CD4-positive, alpha-beta memory T cell (primary cell): ENCODE measurements at regions of chr11 and their contacts with region 1.

Region 1: DNA sequence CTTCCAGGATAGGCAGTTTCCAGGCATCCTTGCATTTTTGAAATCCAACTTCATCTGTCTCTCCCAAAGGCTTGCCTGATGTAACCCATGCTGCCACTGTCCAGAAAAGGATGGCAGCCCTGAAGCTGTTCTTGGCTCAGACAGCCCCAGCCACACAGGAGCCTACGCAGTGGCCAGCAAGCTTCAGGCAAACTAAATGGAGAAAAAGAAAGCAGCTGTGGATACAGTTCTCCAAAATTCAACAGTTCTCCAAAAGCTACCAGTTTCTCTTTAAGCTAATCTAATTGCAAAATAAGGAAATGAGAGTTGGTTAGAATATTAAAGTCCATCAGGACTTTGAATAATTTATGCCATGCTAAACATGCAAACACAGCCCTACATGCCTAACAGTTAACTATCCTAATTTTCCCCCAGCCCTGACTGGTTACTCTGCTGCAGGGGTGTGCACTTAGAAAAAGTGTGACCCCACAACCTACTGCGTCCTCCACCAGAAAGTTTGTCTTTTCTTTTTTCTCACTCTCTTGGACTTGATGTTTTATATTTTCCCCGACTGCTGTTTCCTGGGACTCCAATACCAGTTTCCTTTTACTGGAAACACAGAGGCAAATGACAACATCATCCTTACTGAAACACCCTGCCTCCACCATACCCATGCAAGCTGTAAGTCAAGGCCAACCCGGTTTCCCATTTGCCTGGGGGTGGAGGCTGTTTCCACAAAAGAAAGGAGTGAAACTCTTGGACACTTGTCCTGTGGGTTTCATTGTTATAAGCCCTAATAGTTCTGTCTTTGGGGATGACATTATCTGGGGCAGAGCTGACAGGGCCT is 69.1 kb upstream of the OR5AN1 start:
- DNase-seq: no peak
- H3K4me3 ChIP-seq: no peak overlapping the region
- H3K4me3 Mint-ChIP-seq: no peak overlapping the region
- H3K27ac ChIP-seq: no peak overlapping the region
- H3K27ac Mint-ChIP-seq: no peak overlapping the region
- H3K4me1 ChIP-seq: no peaks in the 10 kb centered on the region
- H3K4me1 Mint-ChIP-seq: peaks cover 2 to 3% (median 3%) of the 10 kb centered on the region in 4 donors
- H3K27me3 ChIP-seq: no peaks in the 10 kb centered on the region
- H3K27me3 Mint-ChIP-seq: peaks cover 4 to 5% of the 10 kb centered on the region in 2 donors

Region 2: DNA sequence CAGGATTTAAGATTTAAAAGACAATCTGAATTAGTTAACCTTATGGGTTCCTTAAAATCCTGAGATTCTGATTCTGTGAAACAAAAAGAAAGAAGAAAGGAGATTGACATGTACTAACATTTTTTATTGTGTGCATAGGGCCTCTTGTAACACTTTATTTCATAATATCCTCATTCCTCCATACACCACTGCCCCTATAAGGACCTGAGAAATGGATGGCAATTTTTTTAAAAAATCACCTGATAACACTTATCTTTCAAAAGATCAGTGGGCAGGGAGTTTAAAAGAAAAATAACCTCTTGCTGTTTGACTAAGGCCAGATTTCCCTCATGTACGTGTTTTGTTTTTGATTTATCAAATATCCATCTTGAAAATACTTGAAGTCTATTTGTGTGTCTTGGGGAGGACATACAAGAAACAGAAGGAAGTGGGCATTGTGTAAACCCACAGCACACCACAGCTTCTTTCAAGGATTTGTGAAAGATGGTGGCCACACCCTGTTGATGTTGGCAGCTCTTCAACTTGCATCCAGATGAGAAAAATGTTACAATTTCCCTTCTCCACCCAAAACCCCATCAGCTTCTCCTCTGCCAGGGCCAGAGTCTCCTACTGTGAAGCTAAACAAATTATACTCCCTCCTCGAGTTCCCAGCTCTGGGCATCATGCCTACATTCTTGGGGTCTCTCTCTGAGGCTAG is 41.9 kb before region 1 on chr11:
- CTCF ChIA-PET with region 1: no interaction called
- POLR2A ChIA-PET with region 1: no interaction called
- intact Hi-C with region 1: no loop called
- DNase-seq: peak in 4 of 5 donors; percentile 45 to 68 (median 60)
- H3K4me3 ChIP-seq: no peak overlapping the region
- H3K4me3 Mint-ChIP-seq: peak overlapping the region in 7 of 8 donors; percentile 1 to 69 (median 60)
- H3K27ac ChIP-seq: no peak overlapping the region
- H3K27ac Mint-ChIP-seq: peak overlapping the region; percentile 18 to 89 (median 57)
- H3K4me1 ChIP-seq: peaks cover 26% of the 10 kb centered on the region
- H3K4me1 Mint-ChIP-seq: peaks cover 21 to 54% (median 35%) of the 10 kb centered on the region in 4 donors
- H3K27me3 ChIP-seq: no peaks in the 10 kb centered on the region
- H3K27me3 Mint-ChIP-seq: peaks cover 0 to 3% of the 10 kb centered on the region in 2 donors

Region 3: GRCh38 chr11:59417023-59417422 is 127.5 kb after region 1 on chr11:
- CTCF ChIA-PET with region 1: no interaction called
- POLR2A ChIA-PET with region 1: no interaction called
- intact Hi-C with region 1: loop called (anchors 5 kb)
- DNase-seq: no peak
- H3K4me3 ChIP-seq: no peak overlapping the region
- H3K4me3 Mint-ChIP-seq: no peak overlapping the region
- H3K27ac ChIP-seq: no peak overlapping the region
- H3K27ac Mint-ChIP-seq: peak overlapping the region in 1 of 7 donors; percentile 12
- H3K4me1 ChIP-seq: no peaks in the 10 kb centered on the region
- H3K4me1 Mint-ChIP-seq: peaks cover 0 to 4% (median 0%) of the 10 kb centered on the region in 4 donors
- H3K27me3 ChIP-seq: no peaks in the 10 kb centered on the region
- H3K27me3 Mint-ChIP-seq: peaks cover 17 to 32% of the 10 kb centered on the region in 2 donors

Region 4: GRCh38 chr11:59475176-59475575 is 185.6 kb after region 1 on chr11:
- CTCF ChIA-PET with region 1: no interaction called
- POLR2A ChIA-PET with region 1: no interaction called
- intact Hi-C with region 1: no loop called
- DNase-seq: no peak
- H3K4me3 ChIP-seq: no peak overlapping the region
- H3K4me3 Mint-ChIP-seq: no peak overlapping the region
- H3K27ac ChIP-seq: no peak overlapping the region
- H3K27ac Mint-ChIP-seq: no peak overlapping the region
- H3K4me1 ChIP-seq: no peaks in the 10 kb centered on the region
- H3K4me1 Mint-ChIP-seq: peaks cover 0 to 2% (median under 1%) of the 10 kb centered on the region in 4 donors
- H3K27me3 ChIP-seq: no peaks in the 10 kb centered on the region
- H3K27me3 Mint-ChIP-seq: peaks cover 7 to 19% of the 10 kb centered on the region in 2 donors

Region 5: DNA sequence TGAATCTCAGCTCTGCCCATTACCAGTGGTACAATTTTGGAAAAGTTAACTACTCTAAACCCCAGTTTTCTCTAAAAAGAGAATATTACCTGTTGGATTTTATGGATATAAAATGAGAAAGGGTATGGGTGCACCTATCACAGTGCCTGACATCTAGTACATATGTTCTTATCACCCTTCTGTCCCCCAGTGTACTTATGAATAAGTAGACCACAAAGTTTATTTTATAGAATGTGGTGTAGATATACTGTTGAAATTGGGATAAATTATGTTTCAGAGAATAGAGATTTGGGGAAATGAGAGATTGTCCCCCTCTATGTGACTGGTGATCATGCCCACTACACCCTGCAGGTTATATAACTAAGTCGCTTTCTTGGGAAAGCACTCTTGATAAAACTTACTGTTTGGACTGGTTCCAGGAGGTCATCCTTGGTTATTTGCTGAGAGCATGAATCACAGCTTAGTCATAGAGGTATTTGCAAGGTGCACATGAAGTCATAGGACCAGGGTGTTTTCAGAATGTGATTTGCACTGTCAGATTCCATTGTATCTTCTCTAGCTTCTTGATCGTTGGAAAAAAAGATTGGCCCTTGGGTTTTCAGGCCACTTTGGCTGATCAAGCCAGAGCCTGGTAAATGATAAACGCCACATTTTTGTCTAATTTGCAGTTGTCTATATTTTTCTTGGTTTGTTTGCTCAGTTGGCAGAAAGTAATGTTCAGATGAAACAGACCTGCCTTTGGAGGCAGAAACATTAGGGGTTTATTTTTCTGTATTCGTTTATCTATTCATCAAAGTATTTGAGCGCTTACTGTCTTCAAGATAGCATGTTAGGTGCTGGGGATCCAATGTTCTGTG is 486.9 kb after region 1 on chr11:
- CTCF ChIA-PET with region 1: no interaction called
- POLR2A ChIA-PET with region 1: no interaction called
- intact Hi-C with region 1: no loop called
- DNase-seq: no peak
- H3K4me3 ChIP-seq: no peak overlapping the region
- H3K4me3 Mint-ChIP-seq: no peak overlapping the region
- H3K27ac ChIP-seq: no peak overlapping the region
- H3K27ac Mint-ChIP-seq: peak overlapping the region in 2 of 7 donors; percentile 30 to 55
- H3K4me1 ChIP-seq: peaks cover 16% of the 10 kb centered on the region
- H3K4me1 Mint-ChIP-seq: peaks cover 10 to 55% (median 25%) of the 10 kb centered on the region in 4 donors
- H3K27me3 ChIP-seq: no peaks in the 10 kb centered on the region
- H3K27me3 Mint-ChIP-seq: no peaks in the 10 kb centered on the region